ENCODE measurements at regions of chr19 and their contacts with region 1.

Region 1: GRCh38 chr19:48391107-48391986 is at the start of gene KDELR1:
- DNase-seq: peak; percentile 96
- H3K4me3 ChIP-seq: peak within 1 kb of the TSS; percentile 70 to 100
- H3K27ac ChIP-seq: peak within 1 kb of the TSS; percentile 80 to 89
- H3K4me1 ChIP-seq: peaks cover 0 to 32% of the 10 kb centered on the region in 2 experiments; a peak in 2 of 4 replicates
- H3K27me3 ChIP-seq: no peaks in the 10 kb centered on the region
- CTCF ChIP-seq: peak; percentile 84
- EP300 ChIP-seq: no peak
- RAD21 ChIP-seq: peak; percentile 29; the same call in 1 of the 2 replicates
- polyA plus RNA-seq, gene KDELR1: 119 and 138 TPM in 2 replicates

Region 2: GRCh38 chr19:48320028-48320541 is 71.3 kb before region 1 on chr19:
- CTCF ChIA-PET with region 1: interaction called, 14 read pairs
- POLR2A ChIA-PET with region 1: no interaction called
- DNase-seq: peak; percentile 67
- H3K4me3 ChIP-seq: no peak overlapping the region; a peak in 1 of 4 replicates
- H3K27ac ChIP-seq: no peak overlapping the region
- H3K4me1 ChIP-seq: peaks cover 12 to 24% of the 10 kb centered on the region in 2 experiments
- H3K27me3 ChIP-seq: no peaks in the 10 kb centered on the region
- CTCF ChIP-seq: peak; percentile 73
- EP300 ChIP-seq: no peak
- RAD21 ChIP-seq: peak; percentile 59

Region 3: GRCh38 chr19:48351341-48351752 is 40.0 kb before region 1 on chr19:
- CTCF ChIA-PET with region 1: interaction called, 17 read pairs
- POLR2A ChIA-PET with region 1: no interaction called
- DNase-seq: peak; percentile 86
- H3K4me3 ChIP-seq: peak overlapping the region in 1 of 2 experiments; percentile 6; a peak in 1 of 4 replicates
- H3K27ac ChIP-seq: no peak overlapping the region
- H3K4me1 ChIP-seq: peaks cover 0 to 2% of the 10 kb centered on the region in 2 experiments; a peak in 1 of 4 replicates
- H3K27me3 ChIP-seq: no peaks in the 10 kb centered on the region
- CTCF ChIP-seq: peak; percentile 82
- EP300 ChIP-seq: no peak
- RAD21 ChIP-seq: peak; percentile 67

Region 4: DNA sequence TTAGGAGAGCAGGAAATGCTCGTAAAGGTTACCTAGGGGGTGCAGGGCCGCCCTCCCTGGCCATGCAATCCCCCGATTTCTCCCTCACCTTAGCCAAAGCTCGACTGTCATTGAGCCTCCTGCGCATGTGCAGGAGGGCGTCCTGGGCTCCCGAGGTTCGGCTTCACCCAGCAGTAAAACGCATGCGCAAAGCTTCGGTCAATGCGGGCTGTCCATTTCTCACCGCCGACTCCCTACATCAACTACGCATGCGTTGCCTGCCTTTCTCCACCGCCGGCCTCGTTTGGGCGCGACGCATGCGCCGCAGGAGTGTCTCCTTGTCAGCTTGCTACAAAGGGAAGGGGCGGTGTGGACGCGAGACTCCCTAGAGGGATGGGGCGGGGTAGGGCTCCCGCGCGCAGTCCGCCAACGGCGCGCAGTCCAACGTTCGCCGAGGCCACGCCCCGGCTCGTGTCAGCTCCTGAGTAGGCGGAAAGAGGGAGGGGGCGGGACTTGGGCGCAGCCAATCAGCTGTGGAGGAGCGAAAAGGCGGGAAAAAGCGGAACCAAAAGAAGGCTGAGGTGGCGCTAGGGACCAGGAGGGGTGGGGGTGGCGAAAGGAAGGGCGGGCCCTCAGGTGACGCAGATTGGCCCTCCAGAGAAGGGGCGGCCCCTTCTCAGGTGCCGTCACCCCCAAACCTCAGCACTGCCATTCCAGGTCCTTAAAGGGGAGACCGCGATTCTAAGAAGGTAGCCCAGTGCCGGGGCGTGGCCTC is 27.4 kb before region 1 on chr19 and contains the starts of genes SYNGR4 and TMEM143:
- CTCF ChIA-PET with region 1: interaction called, 15 read pairs
- POLR2A ChIA-PET with region 1: interaction called, 11 read pairs
- DNase-seq: peak; percentile 97
- H3K4me3 ChIP-seq: peak within 1 kb of the TSS; percentile 62 to 80
- H3K27ac ChIP-seq: peak within 1 kb of the TSS; percentile 74 to 85
- H3K4me1 ChIP-seq: peaks cover 4 to 19% of the 10 kb centered on the region in 2 experiments; a peak in 1 of 4 replicates
- H3K27me3 ChIP-seq: no peaks in the 10 kb centered on the region
- CTCF ChIP-seq: no peak
- EP300 ChIP-seq: no peak
- RAD21 ChIP-seq: no peak
- polyA plus RNA-seq, gene SYNGR4: 0.08 TPM in 1 of 2 replicates, not detected in the other
- polyA plus RNA-seq, gene TMEM143: 20.2 and 21.9 TPM in 2 replicates

Region 5: DNA sequence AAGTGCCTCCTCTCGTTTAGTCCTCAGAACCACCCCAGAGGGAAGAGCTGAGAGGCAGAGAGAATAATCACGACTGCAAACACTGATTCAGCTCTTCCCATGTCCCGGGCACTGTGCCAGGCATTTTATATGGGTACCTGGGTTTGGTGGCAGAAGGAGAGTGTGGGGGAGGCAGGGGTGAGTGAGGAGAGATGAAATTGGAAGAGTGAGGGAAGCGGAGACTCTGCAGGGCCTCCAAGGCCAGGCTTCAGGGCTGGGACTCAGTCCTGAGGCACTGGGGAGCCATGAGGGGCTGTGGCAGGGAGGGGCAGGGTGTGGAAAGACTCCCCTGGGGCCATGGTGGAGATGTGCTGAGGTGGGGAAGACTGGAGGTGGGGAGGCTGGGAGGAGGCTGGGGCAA is 18.4 kb before region 1 on chr19:
- CTCF ChIA-PET with region 1: interaction called, 41 read pairs
- POLR2A ChIA-PET with region 1: interaction called, 4 read pairs
- DNase-seq: peak; percentile 30
- H3K4me3 ChIP-seq: no peak overlapping the region
- H3K27ac ChIP-seq: peak overlapping the region in 1 of 2 experiments; percentile 23; a peak in 1 of 4 replicates
- H3K4me1 ChIP-seq: peaks cover 0 to 36% of the 10 kb centered on the region in 2 experiments; a peak in 1 of 4 replicates
- H3K27me3 ChIP-seq: no peaks in the 10 kb centered on the region
- CTCF ChIP-seq: no peak
- EP300 ChIP-seq: no peak
- RAD21 ChIP-seq: no peak

Region 6: DNA sequence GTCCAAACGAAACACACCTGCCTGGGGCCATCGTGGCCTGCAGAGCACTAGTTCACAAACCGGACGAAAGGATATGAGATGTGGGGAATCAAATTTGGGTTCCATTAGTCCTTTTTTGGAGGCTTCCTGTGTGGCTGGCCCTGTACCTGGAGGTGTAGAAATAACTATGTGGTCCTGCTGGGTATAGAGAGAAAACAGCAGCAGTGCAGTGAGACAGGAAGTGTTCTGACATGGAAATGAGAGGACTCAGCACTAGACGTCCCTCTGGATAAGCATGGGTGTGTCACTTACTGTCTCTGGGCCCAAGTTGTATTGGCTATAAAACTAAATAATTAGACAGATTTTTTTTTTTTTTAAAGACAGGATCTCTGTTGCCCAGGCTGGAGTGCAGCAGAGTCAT is 12.3 kb before region 1 on chr19:
- CTCF ChIA-PET with region 1: interaction called, 41 read pairs
- POLR2A ChIA-PET with region 1: interaction called, 4 read pairs
- DNase-seq: no peak
- H3K4me3 ChIP-seq: no peak overlapping the region
- H3K27ac ChIP-seq: no peak overlapping the region
- H3K4me1 ChIP-seq: no peaks in the 10 kb centered on the region
- H3K27me3 ChIP-seq: no peaks in the 10 kb centered on the region
- CTCF ChIP-seq: no peak
- EP300 ChIP-seq: no peak
- RAD21 ChIP-seq: no peak

Region 7: DNA sequence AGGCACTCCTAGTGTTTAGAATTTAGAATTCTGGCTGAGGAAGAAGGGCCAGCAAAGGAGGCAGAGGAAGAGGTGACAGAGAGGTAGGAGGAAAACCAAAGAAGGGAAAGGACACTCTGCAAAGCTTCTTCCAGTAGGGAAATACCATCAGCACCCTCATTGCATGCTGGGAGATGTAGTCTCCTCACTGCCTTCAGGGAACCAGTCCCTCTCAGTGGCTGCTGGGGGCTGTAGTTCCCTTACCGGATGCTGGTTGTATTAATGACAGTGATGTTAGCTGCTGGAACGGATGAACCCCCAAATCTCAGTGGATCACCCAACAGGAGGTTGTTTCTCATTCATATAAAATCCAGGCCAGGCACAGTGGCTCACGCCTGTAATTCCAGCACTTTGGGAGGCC is 12.3 kb after region 1 on chr19:
- CTCF ChIA-PET with region 1: interaction called, 16 read pairs
- POLR2A ChIA-PET with region 1: no interaction called
- DNase-seq: peak; percentile 91
- H3K4me3 ChIP-seq: no peak overlapping the region
- H3K27ac ChIP-seq: no peak overlapping the region
- H3K4me1 ChIP-seq: no peaks in the 10 kb centered on the region; a peak in 1 of 4 replicates
- H3K27me3 ChIP-seq: no peaks in the 10 kb centered on the region
- CTCF ChIP-seq: no peak
- EP300 ChIP-seq: no peak
- RAD21 ChIP-seq: no peak